Pancreas (tissue), 10 donors: ENCODE measurements at regions of chr11 and their contacts with region 1.

Region 1: GRCh38 chr11:58788355-58789023 is 56.0 kb downstream of the GLYATL2 start:
- DNase-seq: peak in 4 of 6 donors; percentile 52 to 74 (median 59)
- ATAC-seq: peak; percentile 91 to 98 (median 98)
- H3K4me3 ChIP-seq: no peak overlapping the region
- H3K27ac ChIP-seq: no peak overlapping the region
- H3K4me1 ChIP-seq: peaks cover 0 to 8% (median 5%) of the 10 kb centered on the region in 3 donors
- H3K27me3 ChIP-seq: no peaks in the 10 kb centered on the region
- CTCF ChIP-seq: peak; percentile 53 to 74 (median 62)

Region 2: DNA sequence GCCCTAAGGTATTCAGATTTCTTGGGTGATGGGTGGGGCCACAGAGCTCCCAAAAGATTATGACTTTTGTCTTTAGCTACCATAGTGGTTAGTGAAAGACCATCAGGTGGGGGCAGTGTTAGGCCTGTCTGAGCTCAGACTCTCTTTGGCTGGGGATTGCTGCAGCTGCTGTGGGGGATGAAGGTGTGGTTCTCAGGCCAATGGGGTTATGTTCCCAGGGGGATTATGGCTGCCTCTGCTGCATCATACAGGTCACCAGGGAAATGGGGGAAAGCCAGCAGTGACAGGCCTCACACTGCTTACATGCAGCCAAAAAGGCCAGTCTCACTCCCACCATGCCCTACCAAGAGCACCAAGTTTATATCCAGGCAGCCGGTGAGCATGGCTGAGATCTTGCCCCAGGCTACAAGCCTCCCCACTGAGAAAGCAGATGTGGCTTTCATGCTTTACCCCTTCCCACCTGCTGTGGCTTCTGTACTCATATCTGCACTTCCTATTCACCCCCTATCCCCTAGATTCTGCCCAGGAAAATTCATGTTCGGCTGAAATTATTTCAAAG is 141.3 kb before region 1 on chr11:
- intact Hi-C with region 1: loop called in 1 of 3 experiments (anchors 10 kb)
- DNase-seq: no peak
- ATAC-seq: no peak
- H3K4me3 ChIP-seq: no peak overlapping the region
- H3K27ac ChIP-seq: no peak overlapping the region
- H3K4me1 ChIP-seq: no peaks in the 10 kb centered on the region
- H3K27me3 ChIP-seq: no peaks in the 10 kb centered on the region
- CTCF ChIP-seq: no peak